Ovary (tissue), 10 donors: ENCODE measurements at regions of chr11 and their contacts with region 1.

Region 1: DNA sequence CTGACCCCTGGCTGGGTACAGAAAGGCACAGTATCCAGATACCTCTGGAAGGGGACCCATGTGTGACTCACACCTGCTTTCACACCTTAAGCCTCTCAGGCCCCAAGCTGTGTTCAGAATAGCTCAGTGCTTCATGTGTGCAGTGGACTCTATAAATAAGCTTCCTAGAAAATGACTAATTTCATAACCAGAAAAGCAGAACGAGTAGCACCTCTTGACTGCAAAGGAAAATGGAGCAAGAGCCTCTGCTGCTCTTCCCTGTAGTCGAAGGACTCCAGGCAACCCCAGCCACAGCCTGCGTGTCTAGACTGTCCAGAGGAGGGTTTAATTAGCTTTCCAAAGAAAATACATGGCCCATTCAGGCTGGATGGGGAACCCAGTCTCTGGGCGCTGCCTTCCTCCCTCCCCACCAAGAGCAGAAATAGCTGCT is 23.1 kb downstream of the PTPN5 start:
- DNase-seq: no peak
- H3K4me3 ChIP-seq: no peak overlapping the region
- H3K27ac ChIP-seq: no peak overlapping the region
- H3K4me1 ChIP-seq: no peaks in the 10 kb centered on the region
- H3K27me3 ChIP-seq: no peaks in the 10 kb centered on the region
- CTCF ChIP-seq: no peak
- EP300 ChIP-seq: no peak
- POLR2A ChIP-seq: no peak

Region 2: GRCh38 chr11:18115360-18116127 is 652.9 kb before region 1 on chr11:
- intact Hi-C with region 1: loop called in 2 of 4 experiments (anchors 10 kb)
- DNase-seq: peak; percentile 34 to 58 (median 56)
- H3K4me3 ChIP-seq: no peak overlapping the region
- H3K27ac ChIP-seq: no peak overlapping the region
- H3K4me1 ChIP-seq: no peaks in the 10 kb centered on the region
- H3K27me3 ChIP-seq: no peaks in the 10 kb centered on the region
- CTCF ChIP-seq: peak; percentile 48 to 60 (median 58)
- EP300 ChIP-seq: no peak
- POLR2A ChIP-seq: no peak

Region 3: GRCh38 chr11:18540207-18541009 is 228.1 kb before region 1 on chr11:
- intact Hi-C with region 1: loop called in 1 of 4 experiments (anchors 10 kb)
- DNase-seq: no peak
- H3K4me3 ChIP-seq: no peak overlapping the region
- H3K27ac ChIP-seq: no peak overlapping the region
- H3K4me1 ChIP-seq: no peaks in the 10 kb centered on the region
- H3K27me3 ChIP-seq: no peaks in the 10 kb centered on the region
- CTCF ChIP-seq: peak in 1 of 3 donors; percentile 17
- EP300 ChIP-seq: no peak
- POLR2A ChIP-seq: no peak